ENCODE measurements at regions of chr4 and their contacts with region 1.

Region 1: GRCh38 chr4:99949034-99949998 is 759 bp downstream of the H2AZ1 start:
- DNase-seq: peak; percentile 83 to 90 (median 86)
- ATAC-seq: peak; percentile 33 to 70 (median 57)
- H3K4me3 ChIP-seq: peak overlapping the region; percentile 65 to 85 (median 78)
- H3K27ac ChIP-seq: peak overlapping the region; percentile 28 to 95 (median 70)
- H3K4me1 ChIP-seq: peaks cover 4 to 31% (median 21%) of the 10 kb centered on the region in 3 donors
- H3K27me3 ChIP-seq: no peaks in the 10 kb centered on the region
- CTCF ChIP-seq: peak; percentile 56 to 82 (median 72)

Region 2: DNA sequence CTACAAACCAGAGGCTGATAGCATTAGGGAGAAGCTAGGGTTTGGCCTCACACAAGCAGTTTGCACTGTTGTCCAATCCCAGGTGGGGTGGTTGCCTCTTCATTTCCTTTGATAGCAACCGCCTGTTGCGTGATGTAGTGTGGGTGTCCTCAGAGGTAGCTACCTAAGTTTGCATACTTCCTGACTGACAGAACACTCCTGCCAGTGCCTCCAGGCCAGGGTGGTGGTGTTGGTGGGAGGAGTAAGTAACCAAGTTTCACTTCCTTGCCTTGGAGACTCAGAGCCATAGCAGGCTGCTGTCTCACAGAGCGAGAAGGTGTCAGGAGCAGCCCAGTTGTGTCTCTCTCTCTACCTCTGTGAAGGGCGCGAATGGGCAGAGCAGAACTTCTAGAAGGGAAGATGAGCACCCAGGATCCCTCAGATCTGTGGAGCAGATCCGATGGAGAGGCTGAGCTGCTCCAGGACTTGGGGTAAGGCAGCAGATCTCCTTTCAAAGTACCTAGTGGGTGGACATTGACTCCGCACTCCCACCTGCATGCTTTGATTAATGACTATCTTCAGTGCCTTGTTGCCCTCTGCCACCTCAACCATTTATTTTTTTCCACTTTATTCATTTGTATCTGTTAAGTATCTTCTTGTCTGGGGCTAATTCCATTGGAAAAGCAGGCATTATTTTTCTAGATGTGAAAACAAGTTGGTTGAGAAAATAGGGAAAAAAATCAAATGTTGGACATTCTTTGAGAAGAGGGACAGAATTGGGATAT is 132.6 kb before region 1 on chr4 and contains the start of gene DAPP1:
- intact Hi-C with region 1: loop called in 1 of 3 experiments (anchors 10 kb)
- DNase-seq: peak in 1 of 6 donors; percentile 33
- ATAC-seq: peak in 3 of 4 donors; percentile 31 to 70 (median 58)
- H3K4me3 ChIP-seq: peak within 1 kb of the TSS in 1 of 4 donors; percentile 10
- H3K27ac ChIP-seq: peak within 1 kb of the TSS in 2 of 4 donors; percentile 48 to 59
- H3K4me1 ChIP-seq: peaks cover 4 to 7% (median 6%) of the 10 kb centered on the region in 3 donors
- H3K27me3 ChIP-seq: no peaks in the 10 kb centered on the region
- CTCF ChIP-seq: no peak
- total RNA-seq, gene DAPP1: 0.16 to 2.7 (median 0.54) TPM

Region 3: DNA sequence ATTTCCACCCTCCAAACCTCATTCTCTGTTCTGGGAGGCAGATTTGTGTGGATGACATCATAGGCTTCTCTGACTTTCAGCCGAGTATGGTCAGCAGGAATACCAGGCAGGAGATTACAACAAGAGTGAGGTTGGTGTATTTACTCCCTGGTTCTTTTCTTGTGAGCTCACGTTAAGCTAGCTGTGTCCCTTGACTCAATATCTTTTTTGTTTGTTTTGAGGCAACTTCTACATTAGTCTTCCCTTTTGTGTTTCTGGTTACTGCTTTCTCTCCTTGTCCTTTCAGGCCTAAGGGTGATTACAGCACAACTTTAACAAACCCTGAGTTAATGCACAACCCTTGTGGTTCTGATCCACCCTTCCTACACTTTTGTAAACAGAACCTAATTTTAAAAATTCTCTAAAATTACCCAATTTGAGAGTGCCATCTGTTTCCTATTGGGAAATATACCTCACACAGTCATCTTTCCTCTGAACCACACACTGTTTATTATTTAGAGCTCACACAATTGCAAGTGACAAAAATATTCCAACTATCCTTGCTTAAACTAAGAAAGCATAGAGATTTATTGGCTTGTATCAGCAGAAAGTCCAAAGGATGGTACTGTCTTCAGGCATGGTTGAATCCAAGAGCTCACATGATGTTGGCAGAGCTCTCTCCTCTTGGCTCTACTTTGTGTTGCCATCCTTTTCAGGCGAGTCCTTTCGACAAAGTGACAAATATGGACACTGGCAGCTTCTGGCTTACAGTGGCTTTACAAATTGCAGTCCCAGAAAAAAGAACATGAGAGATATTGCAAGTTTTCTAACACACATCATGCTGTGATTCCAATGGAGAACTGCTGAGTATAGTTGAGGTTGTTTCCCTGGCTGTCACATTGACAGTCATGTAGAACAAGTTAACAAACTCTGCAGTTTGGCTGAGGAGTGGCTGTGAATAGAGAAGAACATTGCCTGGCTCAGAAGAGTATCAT is 391.5 kb after region 1 on chr4:
- intact Hi-C with region 1: no loop called
- DNase-seq: no peak
- ATAC-seq: no peak
- H3K4me3 ChIP-seq: no peak overlapping the region
- H3K27ac ChIP-seq: no peak overlapping the region
- H3K4me1 ChIP-seq: no peaks in the 10 kb centered on the region
- H3K27me3 ChIP-seq: no peaks in the 10 kb centered on the region
- CTCF ChIP-seq: no peak